CD14-positive monocyte (primary cell): ENCODE measurements at regions of chr7 and their contacts with region 1.

Region 1: DNA sequence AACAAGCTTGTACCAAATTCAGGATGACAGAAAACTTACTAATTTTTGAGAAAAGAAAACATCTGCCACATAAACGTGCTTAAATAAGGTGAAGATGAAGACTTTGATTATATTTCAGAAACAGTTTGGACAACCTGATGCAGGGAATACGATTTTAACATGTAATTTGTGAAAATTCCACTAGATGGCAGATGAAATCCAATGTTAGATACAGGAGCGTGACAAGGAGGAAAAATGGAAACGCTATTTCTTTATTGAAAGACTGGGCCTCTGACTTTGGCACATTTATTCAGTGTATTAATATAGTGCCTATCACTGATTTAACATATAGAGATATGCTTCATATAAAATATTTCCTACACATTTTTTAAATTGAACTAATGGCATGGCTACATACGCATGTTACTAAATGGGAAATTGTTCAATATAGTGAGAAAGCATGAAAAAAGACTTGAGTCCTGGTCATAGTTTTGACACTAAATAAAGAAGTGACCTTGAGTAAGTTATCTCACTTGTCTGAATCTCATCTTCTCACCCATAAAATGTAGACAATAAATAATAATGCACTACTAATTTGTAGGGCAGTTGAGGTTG is 60.7 kb downstream of the CD36 start:
- DNase-seq: peak; percentile 51 to 75 (median 57)
- H3K4me3 ChIP-seq: peak overlapping the region in 1 of 3 experiments; percentile 24
- H3K4me3 Mint-ChIP-seq: no peak overlapping the region
- H3K27ac ChIP-seq: peak overlapping the region in 1 of 2 donors; percentile 64
- H3K27ac Mint-ChIP-seq: peak overlapping the region in 6 of 7 donors; percentile 51 to 88 (median 82)
- H3K4me1 ChIP-seq: peaks cover 13 to 16% of the 10 kb centered on the region in 2 donors
- H3K4me1 Mint-ChIP-seq: peaks cover 16% of the 10 kb centered on the region
- H3K27me3 ChIP-seq: no peaks in the 10 kb centered on the region
- H3K27me3 Mint-ChIP-seq: peaks cover 1 to 4% (median 3%) of the 10 kb centered on the region in 3 donors
- CTCF ChIP-seq: peak; percentile 82

Region 2: DNA sequence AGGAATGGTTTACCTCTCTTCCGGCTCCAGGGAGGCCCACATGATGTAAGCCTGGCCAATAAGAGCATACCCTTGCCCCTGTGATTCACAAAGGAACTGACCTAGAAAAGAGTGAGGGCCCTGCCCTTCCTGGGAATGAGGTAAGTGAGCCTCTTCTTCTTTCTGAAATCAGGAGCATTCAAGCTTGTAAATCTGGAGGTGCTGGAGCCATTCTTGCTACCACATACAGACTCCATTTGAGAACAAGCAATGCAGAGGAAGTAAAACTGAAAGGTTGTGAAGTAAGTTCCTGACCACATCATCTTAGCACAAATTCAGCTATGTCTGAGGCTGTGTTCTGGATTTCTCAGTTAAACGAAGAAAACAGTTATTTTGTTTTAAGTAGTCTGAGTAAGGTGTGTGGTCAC is 71.5 kb after region 1 on chr7:
- intact Hi-C with region 1: loop called in 1 of 2 experiments (anchors 10 kb)
- DNase-seq: peak; percentile 48 to 56 (median 55)
- H3K4me3 ChIP-seq: peak overlapping the region in 1 of 3 experiments; percentile 60
- H3K4me3 Mint-ChIP-seq: peak overlapping the region in 1 of 2 donors; percentile 75
- H3K27ac ChIP-seq: peak overlapping the region; percentile 55 to 87
- H3K27ac Mint-ChIP-seq: peak overlapping the region; percentile 76 to 94 (median 92)
- H3K4me1 ChIP-seq: peaks cover 22 to 28% of the 10 kb centered on the region in 2 donors
- H3K4me1 Mint-ChIP-seq: peaks cover 29% of the 10 kb centered on the region
- H3K27me3 ChIP-seq: no peaks in the 10 kb centered on the region
- H3K27me3 Mint-ChIP-seq: no peaks in the 10 kb centered on the region
- CTCF ChIP-seq: no peak

Region 3: GRCh38 chr7:80833289-80834268 is 134.4 kb after region 1 on chr7:
- intact Hi-C with region 1: no loop called
- DNase-seq: no peak
- H3K4me3 ChIP-seq: no peak overlapping the region
- H3K4me3 Mint-ChIP-seq: no peak overlapping the region
- H3K27ac ChIP-seq: no peak overlapping the region
- H3K27ac Mint-ChIP-seq: no peak overlapping the region
- H3K4me1 ChIP-seq: peaks cover 20 to 28% of the 10 kb centered on the region in 2 donors
- H3K4me1 Mint-ChIP-seq: peaks cover 32% of the 10 kb centered on the region
- H3K27me3 ChIP-seq: no peaks in the 10 kb centered on the region
- H3K27me3 Mint-ChIP-seq: no peaks in the 10 kb centered on the region
- CTCF ChIP-seq: no peak

Region 4: GRCh38 chr7:81273601-81274397 is 574.7 kb after region 1 on chr7:
- intact Hi-C with region 1: no loop called
- DNase-seq: no peak
- H3K4me3 ChIP-seq: no peak overlapping the region
- H3K4me3 Mint-ChIP-seq: no peak overlapping the region
- H3K27ac ChIP-seq: no peak overlapping the region
- H3K27ac Mint-ChIP-seq: no peak overlapping the region
- H3K4me1 ChIP-seq: no peaks in the 10 kb centered on the region
- H3K4me1 Mint-ChIP-seq: no peaks in the 10 kb centered on the region
- H3K27me3 ChIP-seq: no peaks in the 10 kb centered on the region
- H3K27me3 Mint-ChIP-seq: peaks cover 0 to 1% (median 0%) of the 10 kb centered on the region in 3 donors
- CTCF ChIP-seq: no peak

Region 5: DNA sequence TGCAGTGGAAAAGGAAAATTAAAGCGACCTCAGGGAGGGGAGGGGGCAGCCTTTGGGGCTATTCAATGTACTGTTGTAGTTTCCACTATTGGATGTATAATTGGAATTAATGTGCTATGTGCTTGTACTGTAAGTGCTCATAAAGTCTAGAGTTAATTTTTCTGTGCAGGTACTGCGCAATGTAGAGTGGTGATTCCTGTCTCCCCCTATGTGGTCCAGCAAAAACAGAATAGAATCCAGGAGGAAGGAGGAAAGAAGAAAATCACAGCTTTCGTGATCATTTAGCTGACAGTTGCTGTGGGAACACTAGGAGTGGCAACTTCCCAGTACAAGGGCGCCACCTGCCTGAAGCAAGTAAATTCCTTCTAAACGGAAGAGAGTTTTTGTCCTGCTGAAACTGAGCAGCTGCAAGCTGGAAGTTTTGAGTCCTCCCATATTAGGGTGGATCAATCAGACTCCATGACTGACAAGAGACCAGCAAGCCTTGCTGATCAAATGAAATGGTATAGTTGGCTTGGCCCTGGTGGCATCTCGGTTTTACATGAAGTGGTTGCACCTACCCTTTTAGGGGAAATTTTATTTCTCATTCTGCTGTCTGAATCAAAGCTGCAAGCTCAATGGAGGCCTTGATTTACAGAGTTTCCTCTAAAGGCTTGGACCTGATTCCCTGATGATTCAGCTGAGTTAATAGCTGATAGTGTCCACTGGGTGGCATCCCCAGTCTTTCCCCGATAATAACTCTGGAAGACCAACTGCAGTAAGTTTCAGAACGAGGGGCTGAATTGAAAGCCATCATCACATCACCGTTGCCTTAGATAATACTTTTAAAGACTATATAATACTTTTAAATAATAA is 771.0 kb after region 1 on chr7:
- intact Hi-C with region 1: loop called (anchors 5 to 10 kb)
- DNase-seq: peak; percentile 38 to 58 (median 38)
- H3K4me3 ChIP-seq: no peak overlapping the region
- H3K4me3 Mint-ChIP-seq: no peak overlapping the region
- H3K27ac ChIP-seq: no peak overlapping the region
- H3K27ac Mint-ChIP-seq: no peak overlapping the region
- H3K4me1 ChIP-seq: peaks cover 0 to 3% of the 10 kb centered on the region in 2 donors
- H3K4me1 Mint-ChIP-seq: peaks cover 2% of the 10 kb centered on the region
- H3K27me3 ChIP-seq: no peaks in the 10 kb centered on the region
- H3K27me3 Mint-ChIP-seq: peaks cover 0 to 3% (median 2%) of the 10 kb centered on the region in 3 donors
- CTCF ChIP-seq: peak; percentile 75